ENCODE measurements at regions of chr22 and their contacts with region 1.

Region 1: DNA sequence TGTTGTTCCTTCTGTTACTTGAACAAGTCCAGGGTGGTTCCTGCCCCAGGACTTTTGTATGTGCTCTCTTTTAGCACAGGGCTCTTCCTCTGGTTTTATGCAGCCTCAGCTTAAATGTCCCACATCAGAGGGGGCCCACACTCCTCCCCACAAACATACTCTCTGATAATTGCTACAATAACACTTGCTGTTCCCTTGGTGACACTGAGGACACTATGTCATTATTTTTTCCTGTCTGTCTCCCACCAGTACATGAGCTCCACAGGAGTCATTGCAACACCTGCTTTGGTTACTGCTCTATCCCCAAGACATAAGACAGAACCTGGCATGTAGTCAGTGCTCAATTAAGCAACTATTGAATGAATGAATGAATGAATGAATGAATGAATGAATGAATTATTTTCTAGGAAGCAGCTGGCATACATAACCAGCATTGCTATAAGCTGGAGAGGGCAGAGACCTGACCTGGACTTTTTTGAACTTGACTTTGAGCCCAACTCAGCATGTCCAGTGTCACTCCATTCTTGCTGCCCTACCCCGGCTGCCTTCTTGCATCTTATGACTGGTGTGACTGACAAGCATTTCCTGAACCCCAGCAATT is 7.5 kb upstream of the WNT7B start:
- DNase-seq: no peak
- H3K4me3 ChIP-seq: no peak overlapping the region
- CTCF ChIP-seq: no peak

Region 2: GRCh38 chr22:45584121-45584570 is 400.3 kb before region 1 on chr22:
- in situ Hi-C with region 1: loop called (anchors 10 kb)
- DNase-seq: no peak
- H3K4me3 ChIP-seq: no peak overlapping the region
- CTCF ChIP-seq: no peak

Region 3: DNA sequence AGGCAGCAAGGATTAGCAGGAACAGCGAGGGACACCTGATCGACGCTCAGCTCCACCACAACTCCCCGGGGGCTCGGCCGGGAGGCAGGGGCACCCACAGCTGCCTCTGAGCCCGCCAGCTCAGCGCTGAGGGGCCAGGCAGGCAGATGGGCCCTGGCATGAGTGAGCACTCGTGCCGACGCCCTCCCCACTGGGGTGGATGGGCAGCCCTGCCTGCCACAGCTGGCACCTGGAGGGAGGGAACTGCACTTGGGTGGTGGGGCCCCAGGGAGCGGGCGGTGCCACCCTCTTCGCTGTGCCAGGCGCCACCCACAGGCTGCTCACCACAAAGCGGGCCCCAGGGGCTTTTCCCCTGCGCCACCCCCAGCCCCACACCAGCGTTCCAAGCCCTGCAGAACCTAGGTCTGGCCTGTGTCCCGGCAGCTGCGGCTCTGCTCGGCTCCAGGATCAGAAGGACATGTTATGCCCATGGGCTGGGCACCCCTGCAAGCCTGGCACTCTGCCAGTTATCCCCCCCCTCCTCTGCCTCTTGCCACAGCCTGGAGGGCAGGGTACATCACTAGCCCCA is 36.3 kb before region 1 on chr22:
- in situ Hi-C with region 1: no loop called
- DNase-seq: no peak
- H3K4me3 ChIP-seq: no peak overlapping the region
- CTCF ChIP-seq: no peak